Mammary epithelial cell (primary cell): ENCODE measurements at regions of chr1 and their contacts with region 1.

Region 1: DNA sequence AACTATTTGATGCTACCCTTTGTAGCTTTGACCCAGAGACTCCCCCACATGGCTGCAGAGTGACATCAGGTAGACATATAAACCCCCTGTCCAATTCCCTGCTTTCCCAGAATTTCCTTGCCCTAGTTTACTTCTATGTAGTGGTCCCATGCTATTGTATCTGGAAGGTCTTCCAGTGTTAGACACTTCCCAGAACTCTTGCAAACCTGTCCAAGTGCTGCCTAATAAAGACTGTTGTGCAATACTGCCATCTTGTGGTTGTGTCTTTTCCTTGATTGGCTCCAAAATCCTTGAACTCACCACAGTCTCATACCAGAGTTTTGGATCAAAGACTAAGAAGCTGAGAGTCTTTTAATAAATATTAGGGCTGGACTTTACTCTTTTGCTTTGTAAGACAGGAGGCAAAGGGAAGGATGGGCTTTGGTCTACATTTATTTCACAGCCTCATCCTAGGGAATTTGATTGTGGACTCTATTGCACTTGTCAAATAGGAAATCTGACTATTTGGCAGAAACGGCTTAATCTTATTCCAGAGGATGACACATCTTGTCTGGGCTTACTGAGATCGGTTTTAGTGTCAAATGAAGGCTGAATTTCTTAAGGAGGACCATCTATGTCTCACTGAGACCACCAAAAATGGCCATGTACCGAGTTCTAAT is 169.9 kb downstream of the LRRC7 start:
- DNase-seq: peak; percentile 63
- H3K4me3 ChIP-seq: no peak overlapping the region
- H3K27ac ChIP-seq: no peak overlapping the region
- H3K4me1 ChIP-seq: no peaks in the 10 kb centered on the region
- H3K27me3 ChIP-seq: peaks cover 4% of the 10 kb centered on the region
- CTCF ChIP-seq: peak; percentile 74 to 80

Region 2: DNA sequence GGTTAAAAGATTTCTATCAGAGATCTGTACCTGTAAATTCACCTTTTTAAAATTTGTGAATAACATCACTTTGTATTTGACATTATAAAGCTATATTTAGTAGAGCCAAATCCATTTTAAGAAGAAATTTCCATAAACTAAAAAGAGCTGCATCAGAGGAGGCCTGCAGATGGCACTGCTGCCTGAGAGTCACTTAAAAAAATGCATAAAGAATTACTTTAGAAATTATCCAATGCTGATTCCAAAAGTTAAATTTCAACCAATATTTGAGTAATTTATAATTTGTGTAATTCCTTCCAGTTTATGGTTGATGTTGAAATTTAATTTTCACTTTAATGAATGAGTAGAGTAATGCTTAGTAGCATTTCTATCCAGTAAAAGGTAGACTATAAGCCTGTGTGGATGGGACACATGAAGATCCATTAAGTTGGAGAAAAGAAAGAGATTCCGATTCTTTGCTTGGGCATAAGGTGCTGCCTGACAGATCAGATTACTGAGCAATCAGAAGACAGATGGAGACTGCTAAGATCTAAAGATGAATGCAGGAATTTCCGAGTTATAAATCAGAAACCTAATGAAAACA is 1267.2 kb before region 1 on chr1:
- CTCF ChIA-PET with region 1: no interaction called
- dilution Hi-C with region 1: no loop called
- in situ Hi-C with region 1: loop called in 1 of 2 experiments (anchors 25 kb)
- intact Hi-C with region 1: loop called (anchors 1 kb)
- DNase-seq: no peak
- H3K4me3 ChIP-seq: no peak overlapping the region
- H3K27ac ChIP-seq: no peak overlapping the region
- H3K4me1 ChIP-seq: no peaks in the 10 kb centered on the region
- H3K27me3 ChIP-seq: no peaks in the 10 kb centered on the region
- CTCF ChIP-seq: peak; percentile 68 to 73

Region 3: DNA sequence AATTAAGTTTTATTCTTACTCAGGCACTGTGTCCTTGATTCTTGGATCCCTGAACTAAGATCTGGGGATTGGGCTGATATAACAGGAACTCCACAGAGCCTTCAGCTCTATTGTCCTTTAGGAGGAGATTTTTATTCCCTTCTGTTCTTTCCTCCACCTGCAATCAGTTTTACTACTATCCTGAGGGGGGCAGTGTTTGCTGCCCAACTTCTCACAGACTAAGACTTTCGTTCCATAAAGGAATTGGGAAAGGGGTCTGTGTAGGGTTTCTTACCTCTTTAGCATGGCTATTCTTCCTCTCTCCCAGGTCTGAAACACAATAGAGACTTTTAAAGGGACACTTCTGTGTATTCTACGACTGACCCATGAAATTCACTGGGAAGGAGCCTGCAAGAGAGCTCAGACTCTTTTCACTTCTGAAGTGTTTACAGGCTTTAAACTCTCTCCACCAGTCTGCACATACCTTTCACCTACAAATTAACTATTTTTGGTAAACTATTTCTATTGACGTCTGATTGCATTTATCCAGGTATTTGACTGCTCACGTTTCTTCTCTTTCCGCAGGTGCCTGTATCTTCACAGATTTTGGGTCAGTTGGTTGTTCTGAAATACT is 1137.5 kb before region 1 on chr1:
- CTCF ChIA-PET with region 1: interaction called, 4 read pairs
- dilution Hi-C with region 1: no loop called
- in situ Hi-C with region 1: loop called in 1 of 2 experiments (anchors 25 kb)
- intact Hi-C with region 1: loop called (anchors 1 kb)
- DNase-seq: peak; percentile 8
- H3K4me3 ChIP-seq: no peak overlapping the region
- H3K27ac ChIP-seq: no peak overlapping the region
- H3K4me1 ChIP-seq: no peaks in the 10 kb centered on the region
- H3K27me3 ChIP-seq: peaks cover 2% of the 10 kb centered on the region
- CTCF ChIP-seq: peak; percentile 68 to 77

Region 4: GRCh38 chr1:68826836-68827235 is 910.8 kb before region 1 on chr1:
- CTCF ChIA-PET with region 1: no interaction called
- dilution Hi-C with region 1: no loop called
- in situ Hi-C with region 1: loop called in 1 of 2 experiments (anchors 25 kb)
- intact Hi-C with region 1: no loop called
- DNase-seq: no peak
- H3K4me3 ChIP-seq: no peak overlapping the region
- H3K27ac ChIP-seq: no peak overlapping the region
- H3K4me1 ChIP-seq: no peaks in the 10 kb centered on the region
- H3K27me3 ChIP-seq: peaks cover 2% of the 10 kb centered on the region
- CTCF ChIP-seq: no peak

Region 5: GRCh38 chr1:69305621-69306020 is 432.0 kb before region 1 on chr1:
- CTCF ChIA-PET with region 1: no interaction called
- dilution Hi-C with region 1: no loop called
- in situ Hi-C with region 1: no loop called
- intact Hi-C with region 1: loop called (anchors 1 kb)
- DNase-seq: peak; percentile 8
- H3K4me3 ChIP-seq: no peak overlapping the region
- H3K27ac ChIP-seq: no peak overlapping the region
- H3K4me1 ChIP-seq: no peaks in the 10 kb centered on the region
- H3K27me3 ChIP-seq: no peaks in the 10 kb centered on the region
- CTCF ChIP-seq: peak in 1 of 2 donors; percentile 10

Region 6: GRCh38 chr1:69710484-69711189 is 27.0 kb before region 1 on chr1:
- CTCF ChIA-PET with region 1: no interaction called
- dilution Hi-C with region 1: no loop called
- in situ Hi-C with region 1: no loop called
- intact Hi-C with region 1: no loop called
- DNase-seq: no peak
- H3K4me3 ChIP-seq: no peak overlapping the region
- H3K27ac ChIP-seq: no peak overlapping the region
- H3K4me1 ChIP-seq: no peaks in the 10 kb centered on the region
- H3K27me3 ChIP-seq: no peaks in the 10 kb centered on the region
- CTCF ChIP-seq: no peak

Region 7: DNA sequence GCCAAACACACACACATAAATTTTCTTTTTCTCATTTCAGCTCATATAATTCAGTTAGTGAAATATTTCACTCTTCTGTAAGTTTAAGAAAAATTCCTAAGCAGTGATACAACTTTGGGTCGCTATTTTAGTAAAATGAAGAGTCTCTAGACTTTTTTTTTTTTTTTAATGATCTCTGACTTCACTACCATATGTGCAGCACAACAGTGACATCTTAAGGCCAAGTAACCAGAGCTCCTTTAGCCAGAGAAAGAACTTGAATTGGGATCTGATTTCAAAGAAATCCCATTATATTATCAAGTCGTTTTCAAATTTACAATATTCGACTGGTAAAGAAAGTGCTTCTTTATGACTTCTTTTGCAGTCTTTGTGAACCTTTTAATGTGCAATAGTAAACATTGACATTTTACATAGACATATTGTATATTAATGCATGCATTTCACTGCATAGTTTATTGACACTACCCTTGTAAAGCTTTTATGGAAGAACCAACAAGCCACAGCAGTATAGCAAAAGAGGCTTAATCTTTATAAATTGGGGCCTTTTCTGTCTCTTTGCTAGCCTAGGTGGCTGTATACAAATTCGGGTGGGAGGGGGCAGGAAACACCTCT is 405.5 kb after region 1 on chr1:
- CTCF ChIA-PET with region 1: interaction called, 13 read pairs
- dilution Hi-C with region 1: no loop called
- in situ Hi-C with region 1: no loop called
- intact Hi-C with region 1: no loop called
- DNase-seq: no peak
- H3K4me3 ChIP-seq: no peak overlapping the region
- H3K27ac ChIP-seq: no peak overlapping the region
- H3K4me1 ChIP-seq: no peaks in the 10 kb centered on the region
- H3K27me3 ChIP-seq: no peaks in the 10 kb centered on the region
- CTCF ChIP-seq: peak in 1 of 2 donors; percentile 27

Region 8: DNA sequence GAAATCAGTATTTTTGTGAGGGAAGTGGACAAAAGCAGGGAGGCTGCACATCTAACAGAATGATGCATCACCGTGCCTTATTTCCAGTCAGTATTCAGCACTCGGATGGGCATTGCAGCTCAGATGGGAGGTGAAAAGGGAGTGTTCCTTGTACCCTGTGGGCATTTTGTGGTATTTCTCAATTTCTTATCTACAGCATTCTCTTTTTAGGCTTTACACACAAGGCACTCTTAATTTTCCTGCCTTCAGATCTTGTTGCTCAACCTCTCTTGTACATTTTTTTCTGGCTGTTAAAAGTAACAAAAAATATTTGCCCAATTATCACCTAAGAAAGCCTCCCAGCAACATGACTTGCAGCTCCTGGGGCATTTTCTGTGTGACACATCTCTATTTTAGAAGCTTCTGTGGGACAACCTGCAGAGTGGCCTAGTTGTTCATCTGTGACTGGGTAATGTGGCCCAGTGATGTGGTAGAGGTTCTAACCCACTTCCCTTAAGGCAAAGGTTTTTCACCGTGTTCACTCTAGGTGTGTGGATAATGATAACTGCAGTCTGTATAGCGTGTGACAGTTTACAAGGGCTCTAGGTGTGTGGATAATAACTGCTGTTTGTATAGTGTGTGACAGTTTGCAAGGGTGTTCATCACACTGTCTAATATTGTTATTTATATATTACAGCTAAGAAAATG is 1052.7 kb after region 1 on chr1:
- CTCF ChIA-PET with region 1: no interaction called
- dilution Hi-C with region 1: no loop called
- in situ Hi-C with region 1: no loop called
- intact Hi-C with region 1: no loop called
- DNase-seq: no peak
- H3K4me3 ChIP-seq: no peak overlapping the region
- H3K27ac ChIP-seq: no peak overlapping the region
- H3K4me1 ChIP-seq: no peaks in the 10 kb centered on the region
- H3K27me3 ChIP-seq: peaks cover 2% of the 10 kb centered on the region
- CTCF ChIP-seq: no peak